Head of caudate nucleus (tissue), 42 donors: ENCODE measurements at regions of chrX and their contacts with region 1.

Region 1: DNA sequence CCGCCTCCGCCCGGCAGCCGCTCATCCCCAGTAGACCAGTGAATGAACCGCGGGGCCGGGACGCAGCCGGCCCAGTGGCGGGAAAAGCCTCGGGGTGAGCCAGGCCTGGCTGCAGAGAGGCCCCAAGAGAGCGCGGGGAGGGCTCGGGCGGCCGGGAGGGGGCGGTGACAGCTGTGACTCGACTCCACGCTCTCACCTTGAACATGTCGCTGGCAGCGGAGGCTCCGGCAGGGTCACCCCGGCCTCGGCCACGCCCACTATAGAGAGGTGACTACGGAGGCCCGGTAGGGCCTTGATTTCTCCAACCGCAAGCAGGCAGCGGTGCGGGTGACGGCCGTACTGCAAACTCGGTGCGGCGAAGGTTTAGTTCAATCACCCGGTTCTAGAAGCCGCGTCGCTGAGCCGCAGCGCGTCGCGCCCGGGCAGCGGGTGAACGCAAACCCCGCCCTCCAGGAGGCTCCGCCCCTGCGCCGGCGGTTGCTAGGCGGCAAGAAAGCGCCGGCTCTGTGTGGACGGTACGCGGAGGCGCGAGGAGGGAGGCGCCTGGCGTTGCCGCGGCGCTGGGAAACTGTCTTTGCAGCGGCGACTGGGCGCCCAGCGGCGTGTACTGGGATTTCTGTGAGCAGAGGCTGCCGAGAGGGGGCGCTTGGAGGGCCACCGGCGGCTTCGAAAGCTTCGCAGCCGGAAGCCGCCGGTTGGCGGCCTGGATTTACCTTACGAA is at the starts of genes APOO and CXorf58:
- DNase-seq: peak; percentile 77 to 95 (median 90)

Region 2: GRCh38 chrX:23667239-23668177 is 240.2 kb before region 1 on chrX and contains the start of gene PRDX4:
- intact Hi-C with region 1: no loop called
- DNase-seq: peak; percentile 66 to 93 (median 87)

Region 3: DNA sequence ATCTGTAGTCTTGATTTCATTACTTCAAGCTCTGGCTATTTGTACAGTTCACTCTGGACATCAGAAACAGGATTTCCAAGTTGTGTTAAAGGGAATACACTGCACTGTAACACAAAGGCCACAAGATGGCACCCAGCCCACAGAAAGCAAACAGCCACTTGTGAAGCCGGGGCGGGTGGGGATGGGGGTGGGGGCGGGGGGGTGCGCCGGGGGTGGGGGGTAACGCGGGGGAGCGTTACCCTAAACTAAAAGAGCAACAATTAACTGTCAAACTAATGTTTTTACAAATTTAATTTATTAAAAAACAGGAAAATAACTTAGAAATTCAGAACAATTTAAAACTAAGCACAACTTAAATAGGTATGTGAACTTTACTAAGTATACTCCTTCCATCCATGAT is 213.1 kb before region 1 on chrX:
- intact Hi-C with region 1: loop called (anchors 5 kb)
- DNase-seq: peak in 41 of 42 donors; percentile 13 to 77 (median 58)

Region 4: GRCh38 chrX:23993012-23993633 is 85.5 kb after region 1 on chrX:
- intact Hi-C with region 1: no loop called
- DNase-seq: no peak

Region 5: DNA sequence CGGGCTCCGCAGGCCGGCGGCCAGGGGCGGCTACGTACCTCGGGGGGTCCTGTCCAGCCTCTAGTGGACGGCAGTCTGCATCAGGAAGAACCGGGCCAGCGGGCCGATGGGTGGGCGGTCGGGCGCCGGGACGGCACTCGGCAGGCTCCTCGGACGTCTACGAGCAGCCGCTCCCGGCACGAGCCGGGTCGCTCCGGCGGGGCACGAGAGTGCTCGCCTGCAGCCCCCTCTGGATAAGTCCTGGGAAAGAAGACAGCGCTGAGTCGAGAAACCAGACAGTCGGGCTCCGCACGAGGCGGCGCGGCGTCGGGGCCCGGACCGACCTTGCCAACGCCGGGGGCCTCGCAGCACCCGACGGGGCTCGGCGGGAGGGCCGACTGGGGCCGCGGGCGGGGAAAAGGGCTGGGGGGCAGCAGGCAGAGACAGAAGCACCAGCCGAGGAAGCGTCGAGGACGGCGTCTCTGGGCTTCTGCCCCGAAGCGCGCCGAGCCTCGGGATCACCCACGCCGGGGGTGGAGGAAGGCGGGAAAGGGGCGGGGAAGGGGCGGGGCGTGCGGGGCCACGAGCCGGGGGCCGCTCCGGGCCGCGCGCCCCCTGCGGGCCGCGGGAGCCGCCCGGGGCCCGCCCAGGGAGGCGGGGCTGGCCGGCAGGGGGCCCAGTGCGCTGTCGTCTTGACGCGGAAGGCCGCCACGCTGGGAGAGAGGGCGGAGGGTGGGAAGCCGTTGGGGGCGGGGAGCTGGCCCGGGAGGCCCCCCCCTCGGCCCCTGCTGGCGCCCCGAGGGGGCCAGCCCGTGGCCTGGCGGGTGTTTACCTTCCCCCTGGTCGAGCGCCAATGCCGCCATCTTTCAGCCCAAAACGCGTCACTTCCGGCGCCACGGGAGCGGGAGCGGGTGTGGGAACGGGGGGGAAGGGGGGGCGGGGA is 117.4 kb after region 1 on chrX:
- intact Hi-C with region 1: loop called (anchors 5 kb)
- DNase-seq: peak; percentile 36 to 93 (median 82)

Region 6: DNA sequence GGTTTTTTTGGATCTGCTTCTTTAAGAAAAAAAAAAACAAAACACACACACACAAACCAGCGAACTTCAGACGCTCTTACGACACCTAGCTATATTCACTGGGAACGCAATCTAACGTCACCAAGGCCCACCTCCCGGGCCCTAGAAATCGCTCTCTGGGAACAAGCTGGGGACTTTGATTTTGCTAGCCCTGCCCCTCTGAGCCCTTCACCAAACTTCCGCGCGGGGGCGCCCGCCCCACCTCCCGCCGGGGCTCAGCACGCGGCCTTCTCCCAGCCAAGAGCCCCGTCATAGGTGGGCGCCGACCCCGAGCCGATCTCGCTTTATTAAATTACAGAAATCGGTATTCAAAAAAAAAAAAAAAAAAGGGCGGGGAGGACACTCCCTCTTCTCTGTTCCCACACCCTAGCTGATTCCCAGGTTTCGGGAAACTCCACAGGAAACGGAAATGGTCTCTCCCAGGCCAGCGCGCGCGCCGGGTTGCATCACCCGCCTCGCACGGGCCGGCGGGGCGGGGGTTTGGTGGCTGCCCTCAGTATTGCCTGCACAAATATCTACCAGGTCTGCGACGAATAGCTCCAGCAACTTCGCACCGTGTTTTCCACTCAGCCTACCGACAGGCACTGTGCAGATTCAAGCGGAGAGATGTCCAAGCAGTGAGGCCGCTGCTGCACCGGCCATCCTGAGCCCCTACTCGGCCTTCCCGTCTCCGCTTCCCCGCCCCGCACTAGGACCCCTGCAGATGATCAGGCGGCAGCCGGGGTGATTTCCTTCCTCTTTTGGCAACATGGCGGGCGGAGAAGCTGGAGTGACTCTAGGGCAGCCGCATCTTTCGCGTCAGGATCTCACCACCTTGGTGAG is 146.8 kb after region 1 on chrX and contains the start of gene EIF2S3:
- intact Hi-C with region 1: loop called (anchors 10 kb)
- DNase-seq: peak; percentile 75 to 96 (median 88)

Region 7: DNA sequence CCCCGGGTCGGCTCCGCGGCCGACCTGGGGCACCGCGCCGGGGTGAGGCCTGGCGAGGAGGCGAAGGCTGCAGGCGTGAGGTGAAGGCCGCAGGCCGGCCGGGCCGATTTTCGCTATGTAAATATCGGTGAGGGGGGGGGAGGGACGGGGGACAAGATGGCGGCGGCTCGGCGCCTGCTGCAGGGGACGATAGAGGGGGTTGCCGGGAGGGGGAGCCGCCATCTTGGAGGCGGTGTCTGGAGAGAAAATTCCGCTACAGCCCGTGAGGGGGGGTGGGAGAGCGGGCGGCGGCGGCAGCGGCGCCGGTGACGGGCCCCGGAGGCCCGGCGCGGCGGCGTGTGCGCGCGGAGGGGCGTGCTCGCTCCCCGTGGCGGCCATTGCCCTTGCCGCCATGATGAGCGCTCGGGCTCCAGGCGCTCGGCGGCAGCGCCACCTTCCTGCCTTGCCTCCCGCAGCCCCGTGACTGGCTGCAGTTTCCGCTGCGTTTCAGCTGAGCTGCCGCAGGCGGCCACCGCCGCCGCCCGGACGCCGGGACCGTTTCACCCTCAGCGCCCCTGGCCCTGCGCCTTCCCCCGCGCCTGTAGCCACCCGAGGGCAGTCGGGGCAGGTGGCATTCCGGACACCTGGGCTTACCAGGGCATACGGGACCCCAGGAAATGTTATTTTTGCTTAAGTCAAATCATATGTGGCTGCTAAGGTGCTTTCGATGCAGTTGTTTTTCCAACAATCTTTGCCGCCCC is 242.6 kb after region 1 on chrX:
- intact Hi-C with region 1: loop called (anchors 5 kb)
- DNase-seq: peak; percentile 55 to 96 (median 91)

Region 8: GRCh38 chrX:24219320-24219719 is 311.7 kb after region 1 on chrX:
- intact Hi-C with region 1: no loop called
- DNase-seq: no peak